CD8-positive, alpha-beta T cell (primary cell): ENCODE measurements at regions of chr2 and their contacts with region 1.

Region 1: GRCh38 chr2:73736855-73737779 is at the start of gene TPRKB:
- DNase-seq: peak; percentile 86 to 98 (median 95)
- ATAC-seq: peak; percentile 95
- H3K4me3 ChIP-seq: peak within 1 kb of the TSS; percentile 57 to 89
- H3K4me3 Mint-ChIP-seq: peak within 1 kb of the TSS; percentile 98
- H3K27ac ChIP-seq: peak within 1 kb of the TSS; percentile 44 to 77
- H3K27ac Mint-ChIP-seq: peak within 1 kb of the TSS; percentile 96
- H3K4me1 ChIP-seq: peaks cover 18% of the 10 kb centered on the region
- H3K4me1 Mint-ChIP-seq: peaks cover 23% of the 10 kb centered on the region
- H3K27me3 ChIP-seq: no peaks in the 10 kb centered on the region
- H3K27me3 Mint-ChIP-seq: no peaks in the 10 kb centered on the region
- CTCF ChIP-seq: no peak
- total RNA-seq, gene TPRKB: 19.8 to 21.7 TPM

Region 2: GRCh38 chr2:73385595-73386341 is 351.3 kb before region 1 on chr2 and contains the start of gene ALMS1:
- CTCF ChIA-PET with region 1: no interaction called
- POLR2A ChIA-PET with region 1: interaction called, 3 read pairs
- intact Hi-C with region 1: loop called in 1 of 2 experiments (anchors 10 kb)
- DNase-seq: peak; percentile 76 to 96 (median 86)
- ATAC-seq: peak; percentile 88
- H3K4me3 ChIP-seq: peak within 1 kb of the TSS; percentile 75 to 88
- H3K4me3 Mint-ChIP-seq: peak within 1 kb of the TSS; percentile 88
- H3K27ac ChIP-seq: peak within 1 kb of the TSS; percentile 88 to 90
- H3K27ac Mint-ChIP-seq: peak within 1 kb of the TSS; percentile 94
- H3K4me1 ChIP-seq: peaks cover 20% of the 10 kb centered on the region
- H3K4me1 Mint-ChIP-seq: peaks cover 39% of the 10 kb centered on the region
- H3K27me3 ChIP-seq: no peaks in the 10 kb centered on the region
- H3K27me3 Mint-ChIP-seq: peaks cover 2% of the 10 kb centered on the region
- CTCF ChIP-seq: no peak
- total RNA-seq, gene ALMS1: 14.8 to 16.4 TPM

Region 3: DNA sequence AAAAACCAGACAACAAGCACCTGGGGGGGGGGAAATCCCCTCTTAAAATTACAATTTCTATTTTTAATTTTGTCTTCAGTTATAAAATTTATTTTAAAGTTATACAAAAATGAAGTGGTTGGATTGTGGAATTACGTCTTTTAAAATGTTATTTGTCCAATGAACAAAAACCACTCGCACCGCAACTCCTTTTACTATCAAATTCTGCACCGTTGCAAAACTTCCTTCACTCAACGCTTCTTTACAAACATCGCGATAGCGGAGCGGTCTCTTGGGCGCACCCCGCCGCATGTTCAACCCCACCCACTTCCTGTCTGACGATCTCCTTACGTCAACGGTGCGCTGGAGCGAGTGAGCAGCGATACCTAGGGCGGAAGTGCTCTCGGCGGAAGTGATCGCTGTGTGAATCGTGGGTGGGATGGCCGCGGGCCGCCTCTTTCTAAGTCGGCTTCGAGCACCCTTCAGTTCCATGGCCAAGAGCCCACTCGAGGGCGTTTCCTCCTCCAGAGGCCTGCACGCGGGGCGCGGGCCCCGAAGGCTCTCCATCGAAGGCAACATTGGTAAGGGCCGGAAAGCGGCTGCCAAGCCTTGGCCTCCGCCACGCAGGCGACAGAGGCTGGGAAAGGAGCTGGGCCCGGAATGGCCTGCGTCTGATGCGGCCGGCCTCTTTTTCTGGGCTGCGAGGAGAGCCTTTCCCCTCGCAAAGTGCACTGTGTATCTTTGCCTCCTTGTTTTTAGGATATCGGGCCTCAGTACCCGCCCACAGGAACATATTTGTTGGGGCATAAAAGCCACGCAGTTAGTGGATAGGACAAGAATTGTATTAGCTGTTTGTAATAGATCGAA is 189.6 kb after region 1 on chr2 and contains the start of gene DGUOK:
- CTCF ChIA-PET with region 1: no interaction called
- POLR2A ChIA-PET with region 1: no interaction called
- intact Hi-C with region 1: loop called in 1 of 2 experiments (anchors 1 kb)
- DNase-seq: peak; percentile 90 to 100 (median 96)
- ATAC-seq: peak; percentile 96
- H3K4me3 ChIP-seq: peak within 1 kb of the TSS; percentile 70 to 72
- H3K4me3 Mint-ChIP-seq: peak within 1 kb of the TSS; percentile 88
- H3K27ac ChIP-seq: peak within 1 kb of the TSS; percentile 94
- H3K27ac Mint-ChIP-seq: peak within 1 kb of the TSS; percentile 99
- H3K4me1 ChIP-seq: peaks cover 45% of the 10 kb centered on the region
- H3K4me1 Mint-ChIP-seq: peaks cover 52% of the 10 kb centered on the region
- H3K27me3 ChIP-seq: no peaks in the 10 kb centered on the region
- H3K27me3 Mint-ChIP-seq: no peaks in the 10 kb centered on the region
- CTCF ChIP-seq: no peak
- total RNA-seq, gene DGUOK: 29.0 to 31.8 TPM

Region 4: DNA sequence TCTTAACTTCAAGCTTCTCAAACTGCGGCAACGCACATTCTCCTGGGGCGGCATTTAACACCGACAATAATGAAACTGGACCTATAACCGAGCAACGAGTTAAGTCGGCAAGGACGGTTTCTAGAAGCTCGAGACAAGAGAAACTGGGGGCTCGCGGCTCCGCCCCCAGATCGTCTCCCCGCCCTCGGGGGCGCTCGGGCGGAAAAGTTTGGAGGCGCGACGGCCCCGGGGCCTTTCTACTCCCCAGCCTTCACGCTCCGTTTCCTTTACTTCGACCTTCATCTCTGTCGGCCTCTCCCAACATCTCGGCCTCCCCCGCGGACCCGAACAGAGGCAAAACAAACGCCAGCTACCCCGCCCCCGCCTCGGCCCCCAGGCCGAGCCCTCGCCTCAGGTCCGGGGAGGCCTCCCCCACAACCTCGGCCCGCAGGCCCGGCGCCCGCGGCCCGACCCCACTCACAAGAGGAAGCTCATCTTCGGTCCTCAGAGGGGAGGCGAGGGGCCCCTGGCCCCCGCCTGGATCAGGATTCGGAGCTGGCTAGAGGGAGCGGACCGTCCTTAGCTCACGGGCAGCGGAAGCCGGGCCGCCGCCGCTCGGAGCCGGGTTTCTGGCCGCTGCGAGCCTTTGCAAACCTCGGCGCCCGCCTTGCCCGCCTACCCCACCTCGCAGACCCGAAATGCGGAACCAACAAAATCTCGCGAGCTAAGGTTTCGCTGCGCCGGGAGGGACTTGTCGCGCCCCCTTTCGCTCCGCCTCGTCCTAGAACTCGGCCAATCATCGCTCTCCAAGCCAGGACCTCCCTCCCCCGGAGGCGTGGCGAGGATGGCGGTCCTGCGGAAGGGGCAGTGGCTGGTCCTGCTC is 441.3 kb after region 1 on chr2 and contains the start of gene MOB1A:
- CTCF ChIA-PET with region 1: no interaction called
- POLR2A ChIA-PET with region 1: interaction called, 10 read pairs
- intact Hi-C with region 1: no loop called
- DNase-seq: peak; percentile 96 to 99 (median 98)
- ATAC-seq: peak; percentile 95
- H3K4me3 ChIP-seq: peak within 1 kb of the TSS; percentile 79 to 93
- H3K4me3 Mint-ChIP-seq: peak within 1 kb of the TSS; percentile 92
- H3K27ac ChIP-seq: peak within 1 kb of the TSS; percentile 95
- H3K27ac Mint-ChIP-seq: peak within 1 kb of the TSS; percentile 92
- H3K4me1 ChIP-seq: peaks cover 40% of the 10 kb centered on the region
- H3K4me1 Mint-ChIP-seq: peaks cover 36% of the 10 kb centered on the region
- H3K27me3 ChIP-seq: no peaks in the 10 kb centered on the region
- H3K27me3 Mint-ChIP-seq: no peaks in the 10 kb centered on the region
- CTCF ChIP-seq: no peak
- total RNA-seq, gene MOB1A: 181 to 197 TPM

Region 5: DNA sequence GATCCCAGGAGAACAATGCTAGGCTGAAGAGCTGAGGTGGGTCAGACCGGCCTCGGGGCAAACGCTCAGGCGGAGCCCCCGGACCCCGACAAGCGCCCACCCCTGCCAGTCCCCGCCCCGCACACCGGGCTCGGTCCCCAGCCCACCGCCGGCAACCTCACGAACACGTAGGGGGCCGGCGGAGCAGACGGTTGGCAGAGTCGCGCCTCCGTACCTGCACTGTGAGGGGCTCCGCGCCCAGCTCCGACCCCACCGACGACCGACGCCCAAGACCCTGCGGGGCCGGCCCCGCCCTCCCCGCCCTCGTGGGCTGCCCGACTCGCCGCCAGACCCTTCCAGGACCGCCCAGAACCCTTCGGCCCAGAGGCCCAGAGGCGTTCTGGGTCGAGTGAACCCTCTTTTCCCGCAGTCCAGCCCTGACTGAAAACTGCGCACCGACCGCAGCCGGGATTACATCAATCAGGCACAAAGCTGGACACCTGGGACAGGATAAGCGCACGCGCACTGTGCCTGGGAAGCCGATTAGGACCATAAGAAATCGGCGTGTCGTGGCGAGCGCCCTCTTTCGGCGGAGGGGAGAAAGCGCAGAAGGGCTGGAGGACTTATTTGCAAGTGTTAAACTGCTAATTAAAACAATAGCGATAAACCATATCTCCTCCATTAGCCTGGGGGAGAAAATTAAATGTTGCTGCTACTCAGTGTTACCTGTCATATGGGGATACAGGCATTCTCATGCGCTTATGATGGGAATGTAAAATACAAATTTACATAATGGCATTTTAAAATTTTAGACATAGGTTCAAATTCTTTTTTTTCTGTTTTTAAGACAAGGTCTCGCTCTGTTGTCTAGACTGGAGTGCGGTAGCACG is 654.7 kb after region 1 on chr2:
- CTCF ChIA-PET with region 1: no interaction called
- POLR2A ChIA-PET with region 1: interaction called, 3 read pairs
- intact Hi-C with region 1: loop called (anchors 1 kb)
- DNase-seq: peak; percentile 91 to 98 (median 95)
- ATAC-seq: peak; percentile 90
- H3K4me3 ChIP-seq: peak overlapping the region; percentile 67 to 87
- H3K4me3 Mint-ChIP-seq: peak overlapping the region; percentile 99
- H3K27ac ChIP-seq: peak overlapping the region; percentile 87 to 96
- H3K27ac Mint-ChIP-seq: peak overlapping the region; percentile 100
- H3K4me1 ChIP-seq: peaks cover 20% of the 10 kb centered on the region
- H3K4me1 Mint-ChIP-seq: peaks cover 9% of the 10 kb centered on the region
- H3K27me3 ChIP-seq: no peaks in the 10 kb centered on the region
- H3K27me3 Mint-ChIP-seq: no peaks in the 10 kb centered on the region
- CTCF ChIP-seq: peak; percentile 96

Region 6: GRCh38 chr2:74482801-74483674 is 745.9 kb after region 1 on chr2 and contains the starts of genes CCDC142 and TTC31:
- CTCF ChIA-PET with region 1: no interaction called
- POLR2A ChIA-PET with region 1: no interaction called
- intact Hi-C with region 1: loop called (anchors 1 to 2 kb)
- DNase-seq: peak; percentile 85 to 97 (median 94)
- ATAC-seq: peak; percentile 93
- H3K4me3 ChIP-seq: peak within 1 kb of the TSS; percentile 81 to 97
- H3K4me3 Mint-ChIP-seq: peak within 1 kb of the TSS; percentile 97
- H3K27ac ChIP-seq: peak within 1 kb of the TSS; percentile 88 to 90
- H3K27ac Mint-ChIP-seq: peak within 1 kb of the TSS; percentile 99
- H3K4me1 ChIP-seq: peaks cover 25% of the 10 kb centered on the region
- H3K4me1 Mint-ChIP-seq: peaks cover 42% of the 10 kb centered on the region
- H3K27me3 ChIP-seq: no peaks in the 10 kb centered on the region
- H3K27me3 Mint-ChIP-seq: no peaks in the 10 kb centered on the region
- CTCF ChIP-seq: peak; percentile 74
- total RNA-seq, gene CCDC142: 12.6 to 13.6 TPM
- total RNA-seq, gene TTC31: 25.9 to 30.8 TPM

Region 7: GRCh38 chr2:75646583-75647425 is 1909.7 kb after region 1 on chr2 and contains the start of gene MRPL19:
- CTCF ChIA-PET with region 1: no interaction called
- POLR2A ChIA-PET with region 1: no interaction called
- intact Hi-C with region 1: loop called in 1 of 2 experiments (anchors 10 kb)
- DNase-seq: peak; percentile 48 to 90 (median 75)
- ATAC-seq: peak; percentile 96
- H3K4me3 ChIP-seq: peak within 1 kb of the TSS; percentile 79 to 94
- H3K4me3 Mint-ChIP-seq: peak within 1 kb of the TSS; percentile 96
- H3K27ac ChIP-seq: peak within 1 kb of the TSS; percentile 60 to 63
- H3K27ac Mint-ChIP-seq: peak within 1 kb of the TSS; percentile 94
- H3K4me1 ChIP-seq: peaks cover 10% of the 10 kb centered on the region
- H3K4me1 Mint-ChIP-seq: peaks cover 42% of the 10 kb centered on the region
- H3K27me3 ChIP-seq: no peaks in the 10 kb centered on the region
- H3K27me3 Mint-ChIP-seq: no peaks in the 10 kb centered on the region
- CTCF ChIP-seq: no peak
- total RNA-seq, gene MRPL19: 17.2 to 18.1 TPM